GM12878 (cell line): ENCODE measurements at regions of chr2 and their contacts with region 1.

Region 1: DNA sequence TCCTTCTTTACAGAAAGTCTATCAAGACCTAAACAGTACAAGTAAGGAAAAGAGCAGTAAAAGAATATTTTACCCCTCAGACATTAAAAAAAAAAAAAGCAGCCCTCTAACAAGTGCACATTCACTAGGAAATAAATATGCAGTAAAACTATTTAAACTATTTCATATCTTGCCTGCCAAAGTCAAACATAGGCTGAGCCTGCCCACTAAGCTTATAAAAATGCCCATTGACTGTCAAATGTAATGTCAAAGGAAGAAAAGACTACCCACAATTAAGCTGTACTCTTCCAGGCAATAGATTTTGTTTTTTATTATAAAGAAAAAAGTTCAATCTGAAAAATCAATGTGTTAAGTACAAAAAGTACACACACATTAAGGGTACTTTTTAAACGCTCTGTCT is 11.8 kb downstream of the ALS2 start:
- DNase-seq: no peak
- ATAC-seq: no peak
- H3K4me3 ChIP-seq: no peak overlapping the region
- H3K27ac ChIP-seq: no peak overlapping the region
- H3K4me1 ChIP-seq: no peaks in the 10 kb centered on the region
- H3K27me3 ChIP-seq: no peaks in the 10 kb centered on the region
- CTCF ChIP-seq: no peak
- EP300 ChIP-seq: no peak
- POLR2A ChIP-seq: no peak
- RAD21 ChIP-seq: no peak

Region 2: GRCh38 chr2:201780674-201781581 is 12.0 kb after region 1 on chr2 and contains the start of gene ALS2:
- CTCF ChIA-PET with region 1: interaction called, 12 read pairs
- POLR2A ChIA-PET with region 1: interaction called, 4 read pairs
- RAD21 ChIA-PET with region 1: no interaction called
- SMC1A ChIA-PET with region 1: interaction called, 4 read pairs
- in situ Hi-C with region 1: no loop called
- intact Hi-C with region 1: no loop called
- DNase-seq: peak; percentile 82
- ATAC-seq: peak; percentile 98
- H3K4me3 ChIP-seq: peak within 1 kb of the TSS; percentile 96
- H3K27ac ChIP-seq: peak within 1 kb of the TSS; percentile 80
- H3K4me1 ChIP-seq: no peaks in the 10 kb centered on the region
- H3K27me3 ChIP-seq: no peaks in the 10 kb centered on the region
- CTCF ChIP-seq: no peak
- EP300 ChIP-seq: peak in 1 of 2 experiments; percentile 35; a peak in 1 of 4 replicates
- POLR2A ChIP-seq: peak; percentile 92
- RAD21 ChIP-seq: no peak
- polyA plus RNA-seq, gene ALS2: 2.4 to 4.2 TPM

Region 3: DNA sequence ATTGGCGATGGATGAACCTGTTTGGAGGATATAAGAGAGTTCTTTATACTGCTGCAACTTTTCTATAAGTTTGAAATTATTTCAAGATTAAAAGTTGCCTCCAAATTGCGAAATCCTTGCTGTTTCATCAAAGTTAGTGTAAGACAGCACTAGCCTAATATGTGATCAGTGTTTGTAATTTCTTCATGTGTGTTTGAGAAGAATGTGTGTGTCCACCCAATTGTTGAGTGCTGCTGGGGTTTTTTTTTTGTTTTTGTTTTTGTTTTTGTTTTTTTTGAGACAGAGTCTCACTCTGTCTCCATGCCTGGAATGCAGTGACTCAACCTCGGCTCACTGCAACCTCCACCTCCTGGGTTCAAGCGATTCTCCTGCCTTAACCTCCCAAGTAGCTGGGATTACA is 70.8 kb after region 1 on chr2:
- CTCF ChIA-PET with region 1: no interaction called
- POLR2A ChIA-PET with region 1: no interaction called
- RAD21 ChIA-PET with region 1: no interaction called
- SMC1A ChIA-PET with region 1: no interaction called
- in situ Hi-C with region 1: no loop called
- intact Hi-C with region 1: no loop called
- DNase-seq: no peak
- ATAC-seq: no peak
- H3K4me3 ChIP-seq: no peak overlapping the region
- H3K27ac ChIP-seq: no peak overlapping the region
- H3K4me1 ChIP-seq: no peaks in the 10 kb centered on the region
- H3K27me3 ChIP-seq: no peaks in the 10 kb centered on the region
- CTCF ChIP-seq: no peak
- EP300 ChIP-seq: no peak
- POLR2A ChIP-seq: no peak
- RAD21 ChIP-seq: no peak